GM10248 (cell line): ENCODE measurements at regions of chr2 and their contacts with region 1.

Region 1: GRCh38 chr2:8312861-8313830 is 368.7 kb upstream of the ID2 start:
- DNase-seq: peak; percentile 76
- CTCF ChIP-seq: no peak

Region 2: DNA sequence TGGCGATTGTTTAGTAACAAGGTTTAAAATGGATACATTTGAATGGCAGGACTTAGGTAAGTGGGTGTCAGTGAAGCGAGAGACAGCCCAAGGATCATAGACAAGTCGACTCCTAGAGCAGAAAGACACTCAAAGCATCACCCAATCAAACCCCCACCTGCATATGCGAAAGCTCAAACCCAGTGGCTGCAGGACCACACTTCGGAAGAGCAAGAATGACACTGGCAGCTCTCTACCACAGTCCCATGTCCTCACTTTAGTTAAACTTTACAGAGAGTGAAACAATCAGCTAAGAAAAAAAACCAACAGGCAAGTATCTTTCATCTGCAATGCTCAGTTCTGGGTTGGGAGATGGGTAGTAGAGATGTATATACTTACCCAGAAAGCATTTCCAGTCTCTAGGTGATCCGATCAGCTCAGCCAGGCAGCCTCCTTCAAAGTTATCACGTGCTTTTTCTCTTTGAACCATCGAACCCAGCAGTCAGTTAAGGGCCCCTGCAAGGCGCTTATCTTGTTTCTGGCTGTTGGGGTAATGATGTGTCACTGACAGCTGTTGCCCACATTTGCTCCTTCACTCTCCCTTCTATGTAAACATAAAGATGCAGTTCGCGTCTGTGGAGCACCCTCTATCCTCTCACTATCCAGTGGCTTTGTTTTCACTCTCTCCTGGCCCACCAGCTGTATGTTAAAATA is 11.2 kb after region 1 on chr2:
- CTCF ChIA-PET with region 1: interaction called, 10 read pairs
- POLR2A ChIA-PET with region 1: no interaction called
- DNase-seq: no peak
- CTCF ChIP-seq: no peak